ENCODE measurements at regions of chr1 and their contacts with region 1.

Region 1: GRCh38 chr1:84944767-84945486 is 51.9 kb upstream of the LPAR3 start:
- DNase-seq: peak; percentile 72
- H3K4me3 Mint-ChIP-seq: peak overlapping the region; percentile 70
- H3K27ac Mint-ChIP-seq: peak overlapping the region; percentile 87
- H3K4me1 Mint-ChIP-seq: peaks cover 32% of the 10 kb centered on the region
- H3K27me3 Mint-ChIP-seq: no peaks in the 10 kb centered on the region

Region 2: GRCh38 chr1:84959294-84959693 is 14.4 kb after region 1 on chr1:
- intact Hi-C with region 1: loop called (anchors 1 kb)
- DNase-seq: peak; percentile 51
- H3K4me3 Mint-ChIP-seq: no peak overlapping the region
- H3K27ac Mint-ChIP-seq: peak overlapping the region; percentile 75
- H3K4me1 Mint-ChIP-seq: peaks cover 36% of the 10 kb centered on the region
- H3K27me3 Mint-ChIP-seq: no peaks in the 10 kb centered on the region

Region 3: DNA sequence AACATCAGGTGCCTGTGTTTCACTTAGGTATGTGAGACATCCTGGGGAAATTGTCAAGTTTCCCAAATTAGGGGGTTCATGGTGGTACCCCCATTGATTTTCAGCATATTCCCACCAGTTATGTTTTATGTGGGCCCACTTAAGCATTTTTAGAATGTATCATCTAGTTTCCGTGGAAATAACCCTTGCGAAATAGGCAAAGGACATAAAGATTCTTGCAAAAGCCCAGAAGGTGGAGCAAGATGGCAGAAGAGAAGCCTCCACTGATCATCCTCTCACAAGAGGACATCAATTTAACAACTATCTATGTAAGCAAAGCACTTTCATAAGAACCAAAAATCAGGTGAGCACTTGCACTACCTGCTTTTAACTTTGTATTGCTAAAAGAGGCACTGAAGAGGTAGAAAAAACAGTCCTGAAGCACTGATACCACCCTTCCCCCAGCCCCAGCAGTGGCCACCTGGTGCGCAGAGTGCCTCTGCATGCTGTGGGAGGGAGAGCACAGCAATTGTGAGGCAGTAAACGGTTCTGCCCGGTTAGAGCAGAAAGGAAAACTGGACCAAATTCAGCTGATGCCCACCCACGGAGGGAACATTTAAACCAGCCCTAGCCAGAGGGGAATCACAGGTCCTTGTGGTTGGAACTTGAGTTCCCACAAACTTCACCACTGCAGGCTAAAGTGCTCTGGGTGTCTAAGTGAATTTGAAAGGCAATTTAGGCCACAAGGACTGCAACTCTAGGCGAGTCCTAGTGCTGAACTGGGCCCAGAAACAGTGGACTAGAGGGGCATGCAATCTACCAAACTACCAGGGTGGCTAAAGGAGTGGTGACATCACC is 28.8 kb after region 1 on chr1:
- intact Hi-C with region 1: loop called (anchors 1 kb)
- DNase-seq: no peak
- H3K4me3 Mint-ChIP-seq: peak overlapping the region; percentile 15
- H3K27ac Mint-ChIP-seq: peak overlapping the region; percentile 87
- H3K4me1 Mint-ChIP-seq: peaks cover 79% of the 10 kb centered on the region
- H3K27me3 Mint-ChIP-seq: no peaks in the 10 kb centered on the region

Region 4: GRCh38 chr1:85027242-85027983 is 82.5 kb after region 1 on chr1:
- intact Hi-C with region 1: loop called (anchors 1 kb)
- DNase-seq: no peak
- H3K4me3 Mint-ChIP-seq: no peak overlapping the region
- H3K27ac Mint-ChIP-seq: no peak overlapping the region
- H3K4me1 Mint-ChIP-seq: peaks cover 11% of the 10 kb centered on the region
- H3K27me3 Mint-ChIP-seq: no peaks in the 10 kb centered on the region

Region 5: DNA sequence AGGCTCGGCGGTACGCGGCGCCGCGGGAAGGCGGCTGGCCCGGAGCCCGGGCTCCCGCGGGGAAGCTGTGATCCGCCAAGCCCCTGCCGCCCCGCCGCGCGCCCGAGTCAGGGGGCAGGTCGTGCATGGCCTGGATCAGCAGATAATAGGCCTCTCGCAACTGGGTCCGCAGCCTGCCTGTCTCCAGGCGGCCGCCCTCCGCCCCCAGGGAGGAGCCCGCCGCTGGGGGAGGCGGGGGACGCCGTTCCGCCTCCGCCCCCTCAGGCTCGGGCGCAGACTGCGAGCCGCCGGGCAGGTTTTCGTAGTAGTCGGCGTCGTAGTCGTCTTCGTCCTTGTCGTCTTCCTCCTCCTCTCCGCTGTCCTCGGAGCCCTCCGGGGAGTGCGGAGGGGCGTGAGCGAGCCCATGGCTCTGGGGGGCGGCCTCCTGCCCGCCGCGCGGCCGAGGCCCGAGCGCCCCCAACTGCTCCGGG is 256.0 kb after region 1 on chr1 and contains the start of gene SYDE2:
- intact Hi-C with region 1: loop called (anchors 5 kb)
- DNase-seq: peak; percentile 78
- H3K4me3 Mint-ChIP-seq: peak within 1 kb of the TSS; percentile 90
- H3K27ac Mint-ChIP-seq: peak within 1 kb of the TSS; percentile 88
- H3K4me1 Mint-ChIP-seq: peaks cover 19% of the 10 kb centered on the region
- H3K27me3 Mint-ChIP-seq: peaks cover 20% of the 10 kb centered on the region
- total RNA-seq, gene SYDE2: 1.9 and 2.1 TPM in 2 replicates

Region 6: DNA sequence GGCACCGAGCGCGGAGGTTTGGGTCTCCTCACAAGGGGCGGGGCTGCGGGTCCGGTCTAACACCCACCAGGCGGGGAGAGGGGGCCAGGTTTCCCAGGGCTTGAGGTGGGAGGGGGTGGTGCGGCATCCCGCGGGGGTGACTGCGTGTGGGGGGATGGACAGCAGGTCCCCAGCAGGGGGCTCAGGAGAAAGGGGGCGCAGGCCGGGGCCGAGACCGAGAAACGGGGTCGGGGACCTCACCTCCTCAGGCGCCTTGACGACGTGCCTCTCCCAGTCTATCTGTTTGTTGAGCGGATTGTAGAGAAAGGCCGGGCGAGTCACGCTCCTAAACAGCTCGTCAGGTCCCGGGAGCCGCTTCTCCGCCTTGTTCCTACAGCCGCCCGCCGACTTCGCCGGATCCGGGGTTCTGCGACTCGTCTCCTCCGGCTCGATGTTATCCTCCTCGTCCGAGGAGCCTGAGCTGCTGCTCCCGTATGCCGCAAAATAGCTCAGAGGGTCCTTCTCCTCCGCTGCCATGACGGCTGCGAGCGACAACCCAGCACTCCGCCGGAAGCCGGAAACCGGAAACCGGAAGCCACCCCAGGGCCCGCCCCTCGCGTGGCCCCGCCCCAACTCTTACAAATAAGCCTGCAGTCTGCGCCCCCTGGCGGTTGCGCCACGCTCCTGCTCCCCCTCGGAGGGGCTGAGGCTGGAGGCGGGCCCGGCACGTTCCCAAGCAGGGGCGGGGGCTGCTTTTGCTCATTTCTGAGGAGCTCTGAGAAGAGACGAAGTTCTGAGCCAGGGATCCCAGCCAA is 314.4 kb after region 1 on chr1 and contains the start of gene C1orf52:
- intact Hi-C with region 1: loop called (anchors 1 kb)
- DNase-seq: peak; percentile 94
- H3K4me3 Mint-ChIP-seq: peak within 1 kb of the TSS; percentile 95
- H3K27ac Mint-ChIP-seq: peak within 1 kb of the TSS; percentile 89
- H3K4me1 Mint-ChIP-seq: peaks cover 23% of the 10 kb centered on the region
- H3K27me3 Mint-ChIP-seq: no peaks in the 10 kb centered on the region
- total RNA-seq, gene C1orf52: 23.9 and 25.8 TPM in 2 replicates